Prostate gland (tissue), 2 donors: ENCODE measurements at regions of chr3 and their contacts with region 1.

Region 1: DNA sequence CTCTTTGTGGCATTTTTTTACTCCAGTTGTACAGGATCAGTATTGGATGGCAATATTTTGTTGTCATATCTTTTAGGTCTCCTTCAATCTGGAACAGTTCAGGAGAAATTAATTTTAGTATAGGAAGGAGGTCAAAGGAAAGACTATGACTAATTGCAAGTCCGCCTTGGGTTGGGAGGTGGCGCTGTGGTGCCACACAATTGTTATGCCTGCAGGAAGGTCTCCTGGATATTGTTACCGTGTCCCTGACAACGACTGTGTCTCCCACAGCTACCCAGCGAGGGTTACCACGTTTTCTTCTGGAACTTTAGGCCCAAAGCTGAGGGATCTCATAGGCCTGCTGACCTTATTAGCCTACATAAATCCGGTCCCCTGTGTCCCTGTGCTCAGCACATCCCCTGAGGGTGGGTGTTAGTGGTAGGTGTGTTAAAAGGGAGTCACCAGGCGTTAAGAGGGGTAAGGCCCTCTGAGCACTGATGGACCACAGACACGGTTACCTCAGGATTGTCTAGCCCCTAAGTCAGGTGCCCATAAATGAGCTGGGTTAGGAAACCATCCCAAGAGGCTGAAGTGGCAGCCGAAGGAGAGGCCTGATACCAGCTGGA is 31.5 kb downstream of the KCNAB1 start:
- DNase-seq: peak; percentile 46
- H3K4me3 ChIP-seq: no peak overlapping the region
- H3K27ac ChIP-seq: no peak overlapping the region
- H3K4me1 ChIP-seq: no peaks in the 10 kb centered on the region
- H3K27me3 ChIP-seq: no peaks in the 10 kb centered on the region
- CTCF ChIP-seq: peak; percentile 24 to 72 (median 60)
- POLR2A ChIP-seq: no peak

Region 2: DNA sequence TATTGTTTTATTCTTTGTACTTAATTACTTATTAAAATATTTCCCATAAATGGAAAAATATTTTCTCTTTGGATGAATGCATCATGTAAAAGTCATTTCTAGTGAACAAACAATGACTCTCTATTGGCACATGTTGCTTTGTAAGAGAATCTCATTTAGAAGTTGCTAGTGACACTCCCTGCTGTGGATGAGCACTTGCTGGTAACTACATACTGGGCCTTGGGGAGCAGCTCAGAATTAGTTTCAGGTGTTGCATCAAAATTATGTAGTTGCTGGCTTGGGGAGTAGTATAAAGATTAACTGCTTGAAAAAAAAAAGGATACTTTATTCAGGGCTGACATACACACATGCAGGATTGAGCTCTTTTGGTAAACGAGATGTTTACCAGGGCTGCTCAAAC is 111.9 kb before region 1 on chr3:
- intact Hi-C with region 1: loop called (anchors 5 kb)
- DNase-seq: no peak
- H3K4me3 ChIP-seq: no peak overlapping the region
- H3K27ac ChIP-seq: no peak overlapping the region
- H3K4me1 ChIP-seq: no peaks in the 10 kb centered on the region
- H3K27me3 ChIP-seq: no peaks in the 10 kb centered on the region
- CTCF ChIP-seq: no peak
- POLR2A ChIP-seq: no peak

Region 3: DNA sequence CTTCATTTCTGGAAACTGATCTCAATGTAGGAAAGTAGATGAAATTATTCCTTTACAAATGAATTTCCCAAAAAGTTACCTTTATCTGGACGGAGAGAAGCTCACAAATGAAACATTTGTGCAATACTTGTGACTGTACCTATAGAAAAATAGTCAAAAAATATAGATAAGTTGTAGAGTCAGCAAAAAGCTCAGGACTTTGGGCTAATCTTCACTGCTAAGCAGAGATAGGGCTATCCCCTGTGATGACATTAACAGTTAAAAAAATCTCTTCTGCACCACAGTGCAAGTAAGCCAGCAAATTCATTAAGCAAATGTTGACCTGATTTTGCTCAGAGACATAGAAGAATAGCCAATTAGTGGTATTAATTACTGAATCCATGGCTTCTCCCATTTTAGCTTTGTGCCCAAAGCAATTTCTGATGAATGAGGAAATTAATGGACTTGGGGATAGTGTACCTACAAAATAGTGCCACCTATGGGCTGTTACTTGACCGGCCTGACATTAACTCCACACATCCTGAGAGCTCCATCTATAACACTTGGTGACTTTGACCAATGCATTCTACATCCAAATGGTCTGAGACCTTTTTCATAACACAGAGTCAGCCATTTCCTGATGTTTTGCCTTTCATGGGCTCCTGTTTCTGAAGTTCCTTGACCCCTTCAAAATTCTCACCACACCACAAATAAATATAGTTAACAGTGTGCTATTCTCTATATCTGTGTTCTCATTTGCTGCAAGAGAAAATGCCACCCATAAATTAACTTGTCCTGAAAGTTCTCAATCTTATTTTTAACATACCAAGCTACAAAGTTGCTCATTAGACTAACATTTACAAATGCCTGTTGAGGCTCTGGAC is 298.0 kb after region 1 on chr3:
- intact Hi-C with region 1: loop called (anchors 10 kb)
- DNase-seq: peak; percentile 10
- H3K4me3 ChIP-seq: no peak overlapping the region
- H3K27ac ChIP-seq: no peak overlapping the region
- H3K4me1 ChIP-seq: no peaks in the 10 kb centered on the region
- H3K27me3 ChIP-seq: no peaks in the 10 kb centered on the region
- CTCF ChIP-seq: peak in 3 of 4 experiments; percentile 40 to 52 (median 42)
- POLR2A ChIP-seq: no peak

Region 4: DNA sequence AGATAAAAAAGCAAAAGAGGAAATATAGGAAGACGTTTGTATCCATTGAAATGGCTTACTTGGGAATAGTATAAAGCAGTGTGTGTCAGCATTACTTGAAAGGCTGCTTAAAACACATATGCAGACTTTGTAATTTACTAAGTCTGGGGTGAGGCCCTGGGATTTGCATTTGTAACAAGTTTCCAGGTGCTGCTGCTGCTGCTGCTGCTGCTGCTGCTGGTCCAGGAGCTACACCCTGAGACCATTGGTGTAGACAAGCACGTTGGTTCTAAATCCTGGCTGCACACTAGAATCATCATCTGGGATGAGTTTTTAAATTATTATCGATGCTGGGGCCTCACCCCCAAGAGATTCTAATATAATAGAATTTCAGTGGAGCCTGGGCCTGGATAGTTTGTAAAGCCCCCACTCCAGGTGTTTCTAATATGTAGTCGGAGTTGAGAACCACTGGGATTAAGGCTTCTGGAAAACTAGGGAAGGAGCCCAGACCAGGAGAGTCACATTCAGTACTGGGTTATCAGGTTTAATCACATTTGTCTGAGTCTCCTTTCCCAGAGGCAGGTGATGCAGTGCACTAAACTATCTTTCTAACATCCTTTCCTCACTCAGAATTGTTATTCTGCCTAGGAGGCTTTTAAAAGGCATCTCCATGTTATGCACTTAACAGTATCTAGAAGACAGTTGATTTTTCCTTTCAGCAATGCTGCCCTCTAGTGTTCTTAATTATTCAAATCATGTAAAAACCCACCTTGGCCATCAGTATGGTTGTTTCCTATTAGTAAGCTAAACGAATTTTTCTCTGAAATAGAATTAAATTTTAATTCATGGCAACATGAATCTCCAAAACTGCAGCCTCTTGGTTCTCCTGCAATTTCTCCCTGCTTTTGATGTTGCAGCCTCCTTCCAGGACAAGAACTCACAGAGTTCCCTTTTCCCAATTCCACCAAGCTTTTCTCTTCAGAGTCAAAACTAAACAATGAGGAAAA is 357.6 kb after region 1 on chr3:
- intact Hi-C with region 1: loop called (anchors 5 kb)
- DNase-seq: no peak
- H3K4me3 ChIP-seq: no peak overlapping the region
- H3K27ac ChIP-seq: no peak overlapping the region
- H3K4me1 ChIP-seq: no peaks in the 10 kb centered on the region
- H3K27me3 ChIP-seq: no peaks in the 10 kb centered on the region
- CTCF ChIP-seq: peak; percentile 55 to 72 (median 62)
- POLR2A ChIP-seq: no peak

Region 5: DNA sequence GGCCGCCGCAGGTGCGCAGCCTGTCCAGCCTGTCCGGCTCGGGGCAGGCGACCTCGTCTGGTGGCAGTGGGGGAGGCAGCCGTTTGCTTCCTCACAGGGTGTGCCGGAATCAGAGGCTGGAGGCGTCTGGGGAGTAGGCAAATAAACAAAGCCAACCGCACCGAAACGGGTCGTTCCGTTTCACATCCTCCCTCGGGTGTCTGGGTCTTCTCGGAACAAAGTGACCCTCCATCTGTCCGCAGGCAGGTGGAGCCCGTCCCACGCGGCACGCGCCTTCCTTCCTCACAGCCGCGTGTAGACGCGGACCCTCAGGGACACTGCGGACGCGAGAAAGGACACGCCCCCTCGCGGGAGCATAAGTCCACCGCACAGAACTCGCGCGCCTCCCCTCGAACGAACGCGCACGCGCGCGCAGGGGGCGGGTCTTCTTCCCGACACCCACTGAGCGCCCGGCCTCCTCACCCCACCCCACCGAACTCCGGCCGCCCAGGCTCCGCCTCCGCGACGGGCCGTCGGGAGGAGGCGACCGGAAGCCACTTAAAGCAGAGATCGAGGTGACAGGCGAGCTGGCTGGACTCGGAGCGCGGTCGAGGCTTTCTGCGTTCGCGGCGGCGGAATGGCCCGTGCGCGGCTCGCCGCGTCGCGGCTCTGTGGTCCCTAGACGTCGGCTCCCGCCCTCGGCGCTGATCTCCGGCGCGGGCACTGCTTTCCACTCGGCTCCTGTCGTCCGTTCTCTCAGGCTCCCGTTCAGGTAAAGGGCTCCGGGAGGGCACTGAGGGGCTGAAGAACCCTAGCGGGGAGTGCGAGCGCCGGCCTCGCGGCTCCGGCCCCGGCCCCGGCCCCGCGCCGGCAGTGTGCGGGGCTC is 522.4 kb after region 1 on chr3 and contains the start of gene TIPARP:
- intact Hi-C with region 1: loop called (anchors 5 kb)
- DNase-seq: peak; percentile 99
- H3K4me3 ChIP-seq: peak within 1 kb of the TSS; percentile 88 to 94
- H3K27ac ChIP-seq: peak within 1 kb of the TSS; percentile 96 to 98
- H3K4me1 ChIP-seq: peaks cover 3% of the 10 kb centered on the region
- H3K27me3 ChIP-seq: no peaks in the 10 kb centered on the region
- CTCF ChIP-seq: peak; percentile 55 to 92 (median 89)
- POLR2A ChIP-seq: peak; percentile 100
- total RNA-seq, gene TIPARP: 31.9 to 52.0 TPM

Region 6: GRCh38 chr3:157081681-157082210 is 929.8 kb after region 1 on chr3:
- intact Hi-C with region 1: loop called (anchors 5 kb)
- DNase-seq: peak; percentile 87
- H3K4me3 ChIP-seq: no peak overlapping the region
- H3K27ac ChIP-seq: peak overlapping the region; percentile 34 to 75
- H3K4me1 ChIP-seq: peaks cover 6% of the 10 kb centered on the region
- H3K27me3 ChIP-seq: no peaks in the 10 kb centered on the region
- CTCF ChIP-seq: peak; percentile 97 to 99 (median 98)
- POLR2A ChIP-seq: peak; percentile 70

Region 7: DNA sequence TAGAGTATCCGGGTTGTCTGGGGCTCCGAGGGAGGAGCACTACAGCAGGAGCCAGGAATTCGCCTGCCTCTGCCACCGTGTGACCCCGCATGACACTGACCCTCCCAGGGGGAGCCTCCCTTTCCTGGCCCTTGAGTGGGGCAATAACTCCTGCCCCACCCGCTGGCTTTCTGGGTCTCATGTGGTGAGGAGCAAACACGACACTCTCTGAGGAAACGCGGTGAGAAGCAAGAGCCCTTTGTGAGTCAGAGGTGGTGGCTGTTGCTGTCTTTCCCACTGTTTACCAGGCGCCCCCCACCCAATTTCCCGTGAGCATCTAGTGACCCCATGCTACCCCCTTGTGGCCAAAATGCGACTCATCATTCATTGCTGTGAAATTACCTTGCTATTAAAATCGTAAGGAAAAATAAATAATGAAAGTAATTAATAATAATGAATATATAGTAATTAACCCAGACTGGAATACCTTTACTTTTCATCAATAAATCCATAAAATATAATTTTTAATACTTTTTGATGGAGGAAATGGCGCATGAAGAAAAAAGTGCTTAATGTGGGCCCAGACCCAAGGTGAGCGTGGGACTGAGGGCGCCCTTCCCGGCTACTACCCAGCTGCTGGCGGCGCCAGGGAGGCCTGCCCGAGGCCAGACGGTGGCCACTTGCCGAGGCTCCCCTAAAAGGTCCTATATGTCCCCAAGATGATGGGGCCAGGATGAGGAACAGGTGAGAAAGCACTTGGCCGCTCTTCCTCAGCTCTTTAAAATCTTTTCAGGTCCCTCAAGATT is 978.7 kb after region 1 on chr3:
- intact Hi-C with region 1: loop called (anchors 5 kb)
- DNase-seq: peak; percentile 47
- H3K4me3 ChIP-seq: no peak overlapping the region
- H3K27ac ChIP-seq: peak overlapping the region; percentile 93 to 94
- H3K4me1 ChIP-seq: peaks cover 44% of the 10 kb centered on the region
- H3K27me3 ChIP-seq: no peaks in the 10 kb centered on the region
- CTCF ChIP-seq: peak; percentile 45 to 78 (median 68)
- POLR2A ChIP-seq: no peak